ENCODE measurements at regions of chr20 and their contacts with region 1.

Region 1: DNA sequence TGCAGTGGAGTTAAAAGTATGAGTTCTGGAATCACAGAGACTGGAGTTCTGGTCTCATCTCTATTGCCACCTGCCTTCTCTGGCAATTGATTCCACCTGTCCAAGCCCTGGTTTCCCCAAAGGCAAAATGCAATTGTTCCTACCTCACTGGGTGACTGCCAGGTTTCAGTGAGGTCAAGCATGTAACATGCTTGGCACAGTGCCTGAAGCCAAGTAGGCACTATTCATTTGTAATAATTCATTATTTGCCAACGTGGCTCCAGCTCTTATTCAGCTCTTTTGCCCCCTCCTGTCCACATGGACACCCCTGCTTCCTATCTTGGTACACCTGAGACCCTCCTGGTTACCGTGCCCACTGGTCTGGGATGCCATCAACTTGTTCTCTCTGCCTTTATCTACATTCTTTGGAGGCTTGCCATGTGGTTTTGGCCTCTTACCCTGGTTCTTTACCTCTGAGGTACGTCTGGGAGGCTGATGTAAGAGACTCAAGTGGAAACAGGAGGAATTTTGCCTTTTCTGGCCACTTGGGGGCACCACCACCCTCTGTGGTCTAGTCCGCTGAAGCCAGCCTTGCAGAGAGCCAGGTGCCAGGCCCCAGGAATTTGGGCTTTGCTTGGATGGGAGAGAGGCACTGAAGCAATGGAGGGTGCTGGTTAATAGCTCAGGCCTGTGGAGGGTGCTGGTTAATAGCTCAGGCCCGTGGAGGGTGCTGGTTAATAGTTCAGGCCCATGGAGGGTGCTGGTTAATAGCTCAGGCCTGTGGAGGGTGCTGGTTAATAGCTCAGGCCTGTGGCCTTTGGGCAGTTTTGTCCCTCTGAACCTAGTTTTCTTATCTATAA is 1.7 kb downstream of the KCNK15 start:
- DNase-seq: peak; percentile 81
- ATAC-seq: peak; percentile 61

Region 2: DNA sequence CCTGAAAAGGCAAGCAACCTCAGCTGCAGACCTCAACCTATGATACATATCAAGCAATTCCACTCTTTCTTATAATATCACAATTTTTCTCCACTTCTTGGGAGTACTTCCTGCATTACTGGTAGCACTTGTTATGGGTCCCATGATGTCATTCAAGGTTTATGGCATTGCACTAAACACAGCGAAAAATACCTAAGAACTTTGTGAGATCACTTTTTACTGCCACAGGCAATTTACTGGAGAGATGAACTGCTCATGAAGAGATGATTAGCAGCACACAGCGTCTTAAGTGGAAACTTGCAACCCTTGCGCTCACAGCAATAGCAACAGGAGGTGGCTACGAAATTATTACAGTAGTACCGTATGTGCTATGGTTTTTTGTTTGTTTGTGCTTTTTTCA is 82.3 kb after region 1 on chr20:
- intact Hi-C with region 1: no loop called
- DNase-seq: no peak
- ATAC-seq: no peak

Region 3: GRCh38 chr20:44866703-44867335 is 119.4 kb after region 1 on chr20:
- intact Hi-C with region 1: loop called (anchors 2 kb)
- DNase-seq: no peak
- ATAC-seq: no peak

Measured in Right ventricle myocardium superior (tissue), 1 donor.